ENCODE measurements at regions of chr17 and their contacts with region 1.

Region 1: DNA sequence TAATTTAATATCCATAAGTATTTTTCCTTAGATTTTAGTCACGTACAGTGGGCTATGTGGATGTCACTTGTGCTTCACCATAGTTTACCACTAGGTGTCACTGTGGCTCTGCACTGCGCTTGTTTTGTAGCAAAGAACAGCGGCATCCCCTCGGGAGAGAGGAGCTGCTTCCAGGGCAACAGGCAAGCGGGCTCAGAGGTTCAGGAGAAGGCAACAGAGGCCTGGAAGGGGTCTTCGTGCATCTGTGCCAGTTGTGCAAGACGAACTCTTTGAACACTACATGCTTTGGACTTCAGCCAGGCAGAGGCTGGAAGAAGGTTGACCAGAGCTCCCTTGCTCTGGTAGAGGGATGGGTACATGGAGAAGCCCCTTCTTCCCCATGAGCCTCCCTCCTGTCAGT is 20.6 kb downstream of the CYB561 start:
- DNase-seq: peak; percentile 70 to 78
- H3K4me3 ChIP-seq: no peak overlapping the region
- H3K27ac ChIP-seq: no peak overlapping the region
- H3K4me1 ChIP-seq: peaks cover 0 to 3% (median 1%) of the 10 kb centered on the region in 4 donors
- H3K27me3 ChIP-seq: no peaks in the 10 kb centered on the region
- CTCF ChIP-seq: peak; percentile 90 to 97

Region 2: GRCh38 chr17:63478791-63479494 is 53.5 kb after region 1 on chr17:
- intact Hi-C with region 1: no loop called
- DNase-seq: peak; percentile 65 to 79
- H3K4me3 ChIP-seq: no peak overlapping the region
- H3K27ac ChIP-seq: no peak overlapping the region
- H3K4me1 ChIP-seq: peaks cover 0 to 33% (median 19%) of the 10 kb centered on the region in 4 donors
- H3K27me3 ChIP-seq: peaks cover 4 to 74% of the 10 kb centered on the region in 2 donors
- CTCF ChIP-seq: peak; percentile 45 to 48

Region 3: DNA sequence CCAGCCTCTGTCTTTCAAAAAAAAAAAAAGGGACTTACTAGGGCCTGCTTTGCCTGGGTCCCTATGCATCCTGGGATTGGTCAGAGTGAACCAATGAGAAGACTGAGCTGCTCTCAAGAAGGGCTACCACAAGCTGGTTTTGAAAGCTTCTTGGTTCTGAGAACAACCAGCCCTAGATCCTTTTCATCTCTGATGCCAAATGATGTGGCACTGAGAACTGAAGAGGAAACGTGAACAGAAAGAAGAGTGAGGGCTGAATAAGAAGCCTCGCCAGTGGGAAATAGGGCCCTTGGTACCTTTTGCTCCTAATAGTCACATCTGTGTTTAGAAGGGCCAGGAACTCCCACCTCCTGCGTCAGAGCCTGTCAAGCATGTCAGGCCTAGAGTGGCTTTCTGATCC is 185.9 kb after region 1 on chr17:
- intact Hi-C with region 1: loop called (anchors 5 kb)
- DNase-seq: no peak
- H3K4me3 ChIP-seq: no peak overlapping the region
- H3K27ac ChIP-seq: no peak overlapping the region
- H3K4me1 ChIP-seq: no peaks in the 10 kb centered on the region
- H3K27me3 ChIP-seq: no peaks in the 10 kb centered on the region
- CTCF ChIP-seq: no peak

Region 4: DNA sequence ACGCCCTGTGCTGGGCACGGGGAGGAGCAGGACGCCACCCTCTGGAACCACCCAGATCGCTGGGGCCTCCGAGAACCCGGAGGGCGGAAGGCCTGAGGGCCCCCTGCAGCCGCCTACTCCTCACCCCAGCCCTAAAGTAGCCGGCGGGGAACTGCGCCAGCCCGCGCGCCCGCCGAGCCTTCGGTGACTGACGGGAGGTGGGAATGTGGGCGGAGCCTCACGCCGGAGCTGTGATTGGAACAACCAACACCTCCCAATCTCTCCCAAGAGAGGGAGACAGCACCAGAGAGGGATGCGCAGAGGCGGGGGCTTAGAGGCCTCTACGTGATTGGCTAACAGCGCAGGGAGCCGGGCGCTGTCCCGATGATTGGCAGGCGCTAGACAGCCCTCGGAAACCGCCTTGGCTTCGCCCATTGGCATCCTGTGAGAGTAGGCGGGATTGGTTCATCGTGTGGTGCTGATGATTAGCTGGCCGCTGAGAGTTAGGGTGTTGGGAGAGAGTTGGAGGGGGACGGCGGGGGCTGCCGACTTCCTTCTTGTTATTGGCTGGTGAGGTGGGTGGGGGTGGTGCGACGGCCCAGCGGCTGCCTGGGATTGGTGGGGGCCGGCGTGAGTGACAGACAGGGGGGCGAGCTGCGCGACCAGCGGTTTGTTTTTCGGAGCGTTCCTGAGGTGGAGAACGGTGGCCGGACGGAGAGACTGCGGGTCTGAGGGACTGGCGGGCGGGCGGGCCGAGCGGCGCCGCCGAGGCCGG is 196.5 kb after region 1 on chr17 and contains the start of gene MAP3K3:
- intact Hi-C with region 1: no loop called
- DNase-seq: peak; percentile 100
- H3K4me3 ChIP-seq: peak within 1 kb of the TSS; percentile 67 to 88
- H3K27ac ChIP-seq: peak within 1 kb of the TSS; percentile 82
- H3K4me1 ChIP-seq: peaks cover 0 to 37% (median 19%) of the 10 kb centered on the region in 4 donors
- H3K27me3 ChIP-seq: no peaks in the 10 kb centered on the region
- CTCF ChIP-seq: no peak